ENCODE measurements at regions of chr3 and their contacts with region 1.

Region 1: GRCh38 chr3:112642912-112643506 is 2.1 kb upstream of the CCDC80 start:
- DNase-seq: peak; percentile 92
- H3K4me3 ChIP-seq: peak overlapping the region; percentile 21
- H3K27ac ChIP-seq: no peak overlapping the region
- H3K4me1 ChIP-seq: peaks cover 29% of the 10 kb centered on the region
- H3K27me3 ChIP-seq: no peaks in the 10 kb centered on the region
- CTCF ChIP-seq: peak; percentile 91

Region 2: DNA sequence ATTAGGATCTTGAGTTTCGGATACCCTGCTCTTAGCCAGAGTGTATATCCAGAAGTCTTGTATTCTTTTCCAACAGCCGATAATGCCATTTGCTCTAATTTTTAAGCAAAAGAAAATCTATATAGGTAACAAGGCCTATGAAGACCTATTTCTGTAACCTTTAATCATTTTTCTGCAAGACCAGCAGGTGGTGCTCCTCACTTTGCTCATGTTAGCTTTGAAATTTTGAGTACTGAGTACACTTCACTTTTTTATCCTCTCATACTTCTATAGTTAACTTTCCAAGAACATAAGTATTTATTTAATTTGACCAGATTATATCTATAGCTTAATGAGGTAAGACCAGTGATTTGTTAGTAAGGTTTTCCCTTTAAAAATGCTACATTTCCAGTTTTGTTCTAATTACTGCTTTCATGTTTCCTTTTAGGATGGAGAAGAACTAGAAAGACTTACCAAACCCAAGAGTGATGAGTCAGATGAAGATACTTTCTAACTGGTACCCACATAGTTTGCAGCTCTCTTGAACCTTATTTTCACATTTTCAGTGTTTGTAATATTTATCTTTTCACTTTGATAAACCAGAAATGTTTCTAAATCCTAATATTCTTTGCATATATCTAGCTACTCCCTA is 60.6 kb before region 1 on chr3:
- CTCF ChIA-PET with region 1: no interaction called
- POLR2A ChIA-PET with region 1: no interaction called
- intact Hi-C with region 1: loop called (anchors 5 kb)
- DNase-seq: peak; percentile 68
- H3K4me3 ChIP-seq: no peak overlapping the region
- H3K27ac ChIP-seq: no peak overlapping the region
- H3K4me1 ChIP-seq: no peaks in the 10 kb centered on the region
- H3K27me3 ChIP-seq: no peaks in the 10 kb centered on the region
- CTCF ChIP-seq: peak; percentile 74

Region 3: GRCh38 chr3:112734718-112735350 is 91.8 kb after region 1 on chr3:
- CTCF ChIA-PET with region 1: no interaction called
- POLR2A ChIA-PET with region 1: no interaction called
- intact Hi-C with region 1: loop called (anchors 5 kb)
- DNase-seq: peak; percentile 80
- H3K4me3 ChIP-seq: no peak overlapping the region
- H3K27ac ChIP-seq: no peak overlapping the region
- H3K4me1 ChIP-seq: no peaks in the 10 kb centered on the region
- H3K27me3 ChIP-seq: peaks cover 6% of the 10 kb centered on the region
- CTCF ChIP-seq: peak; percentile 81

Region 4: DNA sequence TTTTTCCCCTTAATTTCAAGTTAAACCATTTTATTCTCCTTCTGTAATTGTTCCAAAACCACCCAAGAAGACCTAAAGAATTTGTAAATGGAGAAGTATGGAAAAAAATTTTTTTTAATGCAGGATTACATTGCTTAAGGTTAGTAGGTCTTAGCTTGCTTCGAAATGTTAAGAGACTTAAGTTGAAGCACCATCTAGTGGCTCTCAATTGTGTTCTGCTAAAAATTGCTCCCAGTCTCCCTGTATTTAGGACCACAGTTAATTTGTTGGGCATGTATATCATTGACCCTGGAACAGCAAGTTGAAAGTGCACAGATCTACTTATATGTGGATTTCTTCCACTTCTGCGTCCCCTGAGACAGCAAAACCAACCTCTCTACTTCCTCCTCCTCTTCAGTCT is 171.3 kb after region 1 on chr3:
- CTCF ChIA-PET with region 1: interaction called, 7 read pairs
- POLR2A ChIA-PET with region 1: no interaction called
- intact Hi-C with region 1: loop called (anchors 2 kb)
- DNase-seq: peak; percentile 33
- H3K4me3 ChIP-seq: no peak overlapping the region
- H3K27ac ChIP-seq: no peak overlapping the region
- H3K4me1 ChIP-seq: no peaks in the 10 kb centered on the region
- H3K27me3 ChIP-seq: no peaks in the 10 kb centered on the region
- CTCF ChIP-seq: peak; percentile 48

Region 5: DNA sequence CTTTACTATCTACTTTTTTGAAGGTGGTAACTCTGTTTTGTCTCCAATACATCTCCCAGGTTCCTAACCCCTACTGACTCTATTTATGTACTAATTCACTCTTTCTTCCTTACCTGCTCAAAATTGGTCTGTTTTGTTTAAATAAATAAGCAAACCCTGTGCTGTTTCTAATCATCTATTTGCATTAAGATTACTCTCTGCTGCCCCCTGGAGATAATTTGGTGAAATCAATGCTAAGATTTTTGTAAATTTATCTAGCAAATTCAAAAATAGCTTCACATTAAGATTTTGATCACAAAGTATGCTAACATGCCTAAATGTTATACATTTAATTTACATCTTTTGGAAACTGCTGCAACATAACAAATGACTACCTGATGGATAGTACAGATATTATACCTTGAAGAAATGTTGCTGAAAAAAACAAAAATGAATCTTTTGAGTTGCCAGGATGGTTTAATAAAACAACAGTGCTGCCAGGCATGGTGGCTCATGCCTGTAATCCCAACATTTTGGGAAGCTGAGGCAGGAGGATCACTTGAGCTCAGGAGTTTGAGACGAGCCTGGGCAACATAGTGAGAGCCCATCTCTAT is 336.3 kb after region 1 on chr3:
- CTCF ChIA-PET with region 1: no interaction called
- POLR2A ChIA-PET with region 1: no interaction called
- intact Hi-C with region 1: loop called (anchors 1 kb)
- DNase-seq: peak; percentile 46
- H3K4me3 ChIP-seq: no peak overlapping the region
- H3K27ac ChIP-seq: no peak overlapping the region
- H3K4me1 ChIP-seq: no peaks in the 10 kb centered on the region
- H3K27me3 ChIP-seq: no peaks in the 10 kb centered on the region
- CTCF ChIP-seq: peak; percentile 72

Region 6: GRCh38 chr3:113287803-113288648 is 645.0 kb after region 1 on chr3:
- CTCF ChIA-PET with region 1: interaction called, 5 read pairs
- POLR2A ChIA-PET with region 1: no interaction called
- intact Hi-C with region 1: loop called (anchors 10 kb)
- DNase-seq: peak; percentile 73
- H3K4me3 ChIP-seq: no peak overlapping the region
- H3K27ac ChIP-seq: no peak overlapping the region
- H3K4me1 ChIP-seq: peaks cover 10% of the 10 kb centered on the region
- H3K27me3 ChIP-seq: no peaks in the 10 kb centered on the region
- CTCF ChIP-seq: peak; percentile 96

Region 7: GRCh38 chr3:113626503-113627371 is 983.7 kb after region 1 on chr3:
- CTCF ChIA-PET with region 1: no interaction called
- POLR2A ChIA-PET with region 1: no interaction called
- intact Hi-C with region 1: loop called (anchors 10 kb)
- DNase-seq: peak; percentile 78
- H3K4me3 ChIP-seq: no peak overlapping the region
- H3K27ac ChIP-seq: no peak overlapping the region
- H3K4me1 ChIP-seq: no peaks in the 10 kb centered on the region
- H3K27me3 ChIP-seq: no peaks in the 10 kb centered on the region
- CTCF ChIP-seq: peak; percentile 90